ENCODE measurements at regions of chr13 and their contacts with region 1.

Region 1: GRCh38 chr13:50810998-50811397 is 32.5 kb downstream of the DLEU7 start:
- DNase-seq: no peak
- H3K4me3 ChIP-seq: no peak overlapping the region
- H3K27ac ChIP-seq: no peak overlapping the region
- H3K4me1 ChIP-seq: no peaks in the 10 kb centered on the region
- H3K27me3 ChIP-seq: peaks cover 2% of the 10 kb centered on the region
- CTCF ChIP-seq: no peak

Region 2: DNA sequence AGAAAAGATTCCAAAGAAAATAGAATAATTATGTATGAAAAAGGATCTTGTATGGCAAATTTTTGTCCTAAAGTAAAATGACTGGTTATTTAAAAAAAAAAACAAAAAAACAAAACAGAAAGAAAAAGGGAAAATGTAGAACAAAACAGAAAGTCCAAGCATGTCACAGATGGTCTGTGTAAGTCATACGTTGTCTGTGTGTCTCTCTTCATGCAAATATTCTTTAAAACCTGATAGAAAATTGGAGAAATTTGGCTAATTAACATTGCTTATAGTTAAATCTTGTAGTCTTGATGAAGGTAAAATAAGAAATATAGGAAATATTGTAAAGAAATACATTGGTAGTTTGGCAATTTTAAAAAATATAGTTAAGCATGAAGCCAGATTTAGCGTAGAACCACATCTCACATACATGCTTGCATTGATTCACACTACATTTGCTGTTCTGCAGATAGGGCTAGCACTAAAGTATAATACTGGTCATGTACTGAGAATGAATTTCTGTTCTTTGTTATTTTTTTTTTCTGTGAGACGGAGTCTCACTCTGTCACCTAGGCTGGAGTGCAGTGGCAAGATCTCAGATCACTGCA is 933.3 kb before region 1 on chr13:
- CTCF ChIA-PET with region 1: no interaction called
- dilution Hi-C with region 1: no loop called
- in situ Hi-C with region 1: no loop called
- intact Hi-C with region 1: no loop called
- DNase-seq: peak; percentile 14
- H3K4me3 ChIP-seq: no peak overlapping the region
- H3K27ac ChIP-seq: no peak overlapping the region
- H3K4me1 ChIP-seq: no peaks in the 10 kb centered on the region
- H3K27me3 ChIP-seq: no peaks in the 10 kb centered on the region
- CTCF ChIP-seq: no peak

Region 3: GRCh38 chr13:50123862-50124536 is 687.0 kb before region 1 on chr13:
- CTCF ChIA-PET with region 1: no interaction called
- dilution Hi-C with region 1: no loop called
- in situ Hi-C with region 1: no loop called
- intact Hi-C with region 1: no loop called
- DNase-seq: peak; percentile 92
- H3K4me3 ChIP-seq: peak overlapping the region; percentile 73 to 97 (median 92)
- H3K27ac ChIP-seq: peak overlapping the region; percentile 80
- H3K4me1 ChIP-seq: peaks cover 16% of the 10 kb centered on the region
- H3K27me3 ChIP-seq: no peaks in the 10 kb centered on the region
- CTCF ChIP-seq: peak in 1 of 2 donors; percentile 18

Region 4: DNA sequence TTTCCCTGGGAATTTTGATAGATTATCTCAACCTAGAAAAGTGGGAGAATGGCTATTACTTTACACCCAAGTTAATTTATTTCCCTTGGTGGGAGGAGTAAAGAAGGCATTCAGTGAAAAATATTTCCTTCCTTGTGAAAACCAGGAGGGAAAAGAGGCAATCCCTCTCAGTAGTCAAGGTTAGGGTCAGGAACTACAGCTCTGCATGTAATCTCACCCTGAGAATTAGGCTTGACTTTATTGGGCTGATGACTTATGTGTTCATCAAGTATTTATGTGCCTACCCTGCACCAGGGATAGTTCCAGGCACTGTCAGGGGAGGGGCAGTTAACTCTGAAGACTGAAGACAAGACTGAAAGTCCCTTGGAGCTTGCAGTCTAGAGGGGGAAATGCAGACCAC is 249.3 kb before region 1 on chr13:
- CTCF ChIA-PET with region 1: no interaction called
- dilution Hi-C with region 1: no loop called
- in situ Hi-C with region 1: no loop called
- intact Hi-C with region 1: loop called (anchors 10 kb)
- DNase-seq: no peak
- H3K4me3 ChIP-seq: no peak overlapping the region
- H3K27ac ChIP-seq: no peak overlapping the region
- H3K4me1 ChIP-seq: no peaks in the 10 kb centered on the region
- H3K27me3 ChIP-seq: no peaks in the 10 kb centered on the region
- CTCF ChIP-seq: no peak